ENCODE measurements at regions of chr3 and their contacts with region 1.

Region 1: DNA sequence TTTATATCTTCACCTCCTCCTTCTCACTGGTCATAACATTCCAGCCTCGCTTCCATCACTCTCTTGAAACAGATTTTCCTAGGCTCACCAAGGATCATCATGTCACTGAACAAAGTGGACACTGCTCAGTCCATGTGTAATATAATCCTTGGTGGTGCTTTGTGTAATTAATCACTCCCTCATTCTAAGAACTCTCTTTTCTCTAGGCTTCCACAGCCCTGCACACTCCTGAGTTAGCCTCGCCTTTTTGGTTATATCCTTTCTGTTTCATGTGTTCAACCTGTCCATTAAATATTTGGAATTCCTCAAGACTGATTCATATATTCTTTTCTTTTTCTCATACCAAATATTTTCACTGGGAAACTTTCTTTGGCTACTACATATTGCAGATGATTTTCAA is 440.8 kb downstream of the PYDC2 start:
- DNase-seq: no peak
- H3K4me3 ChIP-seq: no peak overlapping the region
- H3K27ac ChIP-seq: no peak overlapping the region
- H3K4me1 ChIP-seq: no peaks in the 10 kb centered on the region
- H3K27me3 ChIP-seq: no peaks in the 10 kb centered on the region
- CTCF ChIP-seq: no peak
- POLR2A ChIP-seq: no peak

Region 2: GRCh38 chr3:189921770-189922169 is 1980.0 kb before region 1 on chr3:
- intact Hi-C with region 1: no loop called
- DNase-seq: no peak
- H3K4me3 ChIP-seq: no peak overlapping the region
- H3K27ac ChIP-seq: no peak overlapping the region
- H3K4me1 ChIP-seq: no peaks in the 10 kb centered on the region
- H3K27me3 ChIP-seq: no peaks in the 10 kb centered on the region
- CTCF ChIP-seq: no peak
- POLR2A ChIP-seq: no peak

Region 3: GRCh38 chr3:192372616-192373015 is 470.9 kb after region 1 on chr3:
- intact Hi-C with region 1: loop called (anchors 5 kb)
- DNase-seq: no peak
- H3K4me3 ChIP-seq: no peak overlapping the region
- H3K27ac ChIP-seq: no peak overlapping the region
- H3K4me1 ChIP-seq: no peaks in the 10 kb centered on the region
- H3K27me3 ChIP-seq: no peaks in the 10 kb centered on the region
- CTCF ChIP-seq: no peak
- POLR2A ChIP-seq: no peak